ENCODE measurements at regions of chr9 and their contacts with region 1.

Region 1: GRCh38 chr9:80538976-80539375 is 967.2 kb downstream of the TLE4 start:
- DNase-seq: no peak
- H3K4me3 ChIP-seq: no peak overlapping the region
- H3K27ac ChIP-seq: no peak overlapping the region
- H3K4me1 ChIP-seq: no peaks in the 10 kb centered on the region
- H3K27me3 ChIP-seq: no peaks in the 10 kb centered on the region
- CTCF ChIP-seq: no peak
- EP300 ChIP-seq: no peak
- POLR2A ChIP-seq: no peak

Region 2: GRCh38 chr9:80435591-80435990 is 103.4 kb before region 1 on chr9:
- in situ Hi-C with region 1: loop called in 1 of 4 experiments (anchors 25 kb)
- intact Hi-C with region 1: no loop called
- DNase-seq: no peak
- H3K4me3 ChIP-seq: no peak overlapping the region
- H3K27ac ChIP-seq: no peak overlapping the region
- H3K4me1 ChIP-seq: no peaks in the 10 kb centered on the region
- H3K27me3 ChIP-seq: no peaks in the 10 kb centered on the region
- CTCF ChIP-seq: no peak
- EP300 ChIP-seq: no peak
- POLR2A ChIP-seq: no peak